GM12878 (cell line): ENCODE measurements at regions of chr2 and their contacts with region 1.

Region 1: DNA sequence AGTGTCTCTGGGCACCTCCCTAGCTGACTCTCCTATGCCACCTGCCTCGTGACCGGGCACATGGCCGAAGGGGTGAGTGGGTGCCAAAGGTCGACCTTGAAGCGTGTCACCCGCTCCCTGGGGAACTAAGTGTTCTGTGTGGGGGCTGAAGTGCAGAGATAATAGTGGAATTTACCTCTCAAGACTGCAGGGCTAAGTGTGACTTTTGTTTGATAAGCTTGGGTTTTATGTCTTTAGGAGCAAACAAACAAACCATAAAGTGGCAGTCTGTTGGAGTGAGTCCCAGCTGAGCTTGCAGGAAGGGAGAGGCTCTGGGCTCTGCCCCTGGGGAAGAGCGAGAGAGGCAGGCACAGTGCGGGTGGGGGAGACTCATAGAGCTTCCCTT is 64.9 kb downstream of the BCL2L11 start:
- DNase-seq: no peak
- ATAC-seq: peak; percentile 62
- H3K4me3 ChIP-seq: no peak overlapping the region
- H3K27ac ChIP-seq: no peak overlapping the region
- H3K4me1 ChIP-seq: no peaks in the 10 kb centered on the region
- H3K27me3 ChIP-seq: peaks cover 0 to 22% of the 10 kb centered on the region in 2 experiments; a peak in 2 of 4 replicates
- CTCF ChIP-seq: no peak
- EP300 ChIP-seq: no peak
- POLR2A ChIP-seq: no peak
- RAD21 ChIP-seq: no peak

Region 2: DNA sequence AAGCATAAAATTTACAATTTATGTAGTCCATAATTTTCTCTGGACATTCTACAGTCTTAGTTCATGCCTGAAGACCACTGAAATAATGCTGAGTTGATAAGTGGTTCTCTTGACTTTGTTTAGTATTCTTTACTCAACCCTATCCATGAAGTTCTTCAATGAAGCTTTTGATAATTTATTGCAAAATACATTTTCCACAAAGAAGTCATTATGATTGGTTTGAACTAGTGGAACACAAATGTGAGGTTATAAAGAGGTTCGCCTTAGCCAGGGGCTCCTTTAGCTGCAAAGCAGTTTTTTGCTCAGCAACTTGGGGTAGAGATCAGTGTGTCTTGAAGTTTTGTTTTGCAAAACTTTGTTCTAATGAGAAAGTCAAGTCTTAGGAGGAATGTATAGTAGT is 59.0 kb before region 1 on chr2:
- CTCF ChIA-PET with region 1: interaction called, 3 read pairs
- POLR2A ChIA-PET with region 1: no interaction called
- RAD21 ChIA-PET with region 1: interaction called, 8 read pairs
- SMC1A ChIA-PET with region 1: interaction called, 13 read pairs
- in situ Hi-C with region 1: no loop called
- intact Hi-C with region 1: no loop called
- DNase-seq: no peak
- ATAC-seq: no peak
- H3K4me3 ChIP-seq: no peak overlapping the region
- H3K27ac ChIP-seq: no peak overlapping the region
- H3K4me1 ChIP-seq: no peaks in the 10 kb centered on the region; the same call in 1 of the 2 replicates
- H3K27me3 ChIP-seq: no peaks in the 10 kb centered on the region
- CTCF ChIP-seq: no peak
- EP300 ChIP-seq: no peak
- POLR2A ChIP-seq: no peak
- RAD21 ChIP-seq: no peak

Region 3: DNA sequence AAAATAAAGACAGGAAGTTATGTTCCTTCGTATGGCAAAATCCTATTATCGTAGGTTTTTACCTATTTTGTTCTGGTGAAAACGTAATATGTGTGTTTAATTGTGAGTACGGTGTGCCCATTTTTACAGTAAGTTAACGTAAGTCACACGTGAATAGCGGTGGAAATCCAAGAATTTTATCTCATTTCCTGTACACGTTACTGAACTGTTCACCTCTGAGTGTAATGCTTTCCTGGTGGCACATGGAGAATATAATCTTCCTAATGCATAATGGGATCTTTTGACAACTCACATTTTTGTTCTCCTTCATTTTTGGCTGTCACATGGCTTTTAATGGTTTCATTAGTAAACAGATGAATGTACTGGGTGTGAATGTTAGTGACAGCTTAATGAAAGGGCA is 36.7 kb before region 1 on chr2:
- CTCF ChIA-PET with region 1: interaction called, 3 read pairs
- POLR2A ChIA-PET with region 1: no interaction called
- RAD21 ChIA-PET with region 1: interaction called, 3 read pairs
- SMC1A ChIA-PET with region 1: interaction called, 42 read pairs
- in situ Hi-C with region 1: no loop called
- intact Hi-C with region 1: no loop called
- DNase-seq: no peak
- ATAC-seq: no peak
- H3K4me3 ChIP-seq: no peak overlapping the region
- H3K27ac ChIP-seq: no peak overlapping the region
- H3K4me1 ChIP-seq: peaks cover 6% of the 10 kb centered on the region
- H3K27me3 ChIP-seq: no peaks in the 10 kb centered on the region
- CTCF ChIP-seq: no peak
- EP300 ChIP-seq: no peak
- POLR2A ChIP-seq: no peak
- RAD21 ChIP-seq: no peak

Region 4: DNA sequence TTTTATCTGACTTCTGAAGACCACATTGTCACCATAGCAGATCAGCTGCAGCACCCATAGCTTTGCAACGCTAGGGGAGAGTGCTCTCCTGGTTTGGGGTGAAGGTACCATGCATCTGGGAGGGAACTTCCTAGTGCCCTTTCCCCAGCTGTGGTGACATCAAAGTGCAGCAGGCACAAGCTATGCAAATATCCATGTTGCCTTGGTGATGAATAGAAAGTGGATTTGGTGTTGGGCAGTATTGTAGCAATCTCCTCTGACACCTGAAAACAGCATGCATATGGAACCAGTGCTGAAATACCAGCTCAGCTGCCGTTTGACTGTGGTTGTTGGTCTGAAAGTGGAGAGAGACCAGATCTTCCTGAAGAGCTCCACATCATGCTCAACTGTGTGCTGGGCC is 27.8 kb before region 1 on chr2:
- CTCF ChIA-PET with region 1: interaction called, 5 read pairs
- POLR2A ChIA-PET with region 1: interaction called, 3 read pairs
- RAD21 ChIA-PET with region 1: interaction called, 3 read pairs
- SMC1A ChIA-PET with region 1: interaction called, 21 read pairs
- in situ Hi-C with region 1: no loop called
- intact Hi-C with region 1: no loop called
- DNase-seq: peak; percentile 69
- ATAC-seq: peak; percentile 82
- H3K4me3 ChIP-seq: no peak overlapping the region
- H3K27ac ChIP-seq: no peak overlapping the region
- H3K4me1 ChIP-seq: peaks cover 19% of the 10 kb centered on the region
- H3K27me3 ChIP-seq: no peaks in the 10 kb centered on the region
- CTCF ChIP-seq: peak; percentile 19 to 27 (median 22); a peak in 3 of 6 replicates
- EP300 ChIP-seq: no peak
- POLR2A ChIP-seq: no peak
- RAD21 ChIP-seq: no peak

Region 5: GRCh38 chr2:111201214-111201613 is 15.6 kb after region 1 on chr2:
- CTCF ChIA-PET with region 1: interaction called, 5 read pairs
- POLR2A ChIA-PET with region 1: interaction called, 4 read pairs
- RAD21 ChIA-PET with region 1: interaction called, 11 read pairs
- SMC1A ChIA-PET with region 1: interaction called, 70 read pairs
- in situ Hi-C with region 1: no loop called
- intact Hi-C with region 1: no loop called
- DNase-seq: peak; percentile 87
- ATAC-seq: peak; percentile 90
- H3K4me3 ChIP-seq: no peak overlapping the region
- H3K27ac ChIP-seq: peak overlapping the region; percentile 26; the same call in 1 of the 2 replicates
- H3K4me1 ChIP-seq: peaks cover 46% of the 10 kb centered on the region
- H3K27me3 ChIP-seq: no peaks in the 10 kb centered on the region
- CTCF ChIP-seq: no peak
- EP300 ChIP-seq: peak; percentile 84 to 90; a peak in 3 of 4 replicates
- POLR2A ChIP-seq: no peak
- RAD21 ChIP-seq: no peak

Region 6: GRCh38 chr2:111231532-111232252 is 46.1 kb after region 1 on chr2:
- CTCF ChIA-PET with region 1: no interaction called
- POLR2A ChIA-PET with region 1: no interaction called
- RAD21 ChIA-PET with region 1: no interaction called
- SMC1A ChIA-PET with region 1: no interaction called
- in situ Hi-C with region 1: no loop called
- intact Hi-C with region 1: no loop called
- DNase-seq: no peak
- ATAC-seq: peak; percentile 54
- H3K4me3 ChIP-seq: no peak overlapping the region
- H3K27ac ChIP-seq: no peak overlapping the region
- H3K4me1 ChIP-seq: no peaks in the 10 kb centered on the region
- H3K27me3 ChIP-seq: no peaks in the 10 kb centered on the region
- CTCF ChIP-seq: no peak
- EP300 ChIP-seq: no peak
- POLR2A ChIP-seq: no peak
- RAD21 ChIP-seq: no peak